Caco-2 (cell line): ENCODE measurements at regions of chr16 and their contacts with region 1.

Region 1: GRCh38 chr16:67372664-67373063 is 20.6 kb downstream of the TPPP3 start:
- DNase-seq: peak in 1 of 2 experiments; percentile 48
- H3K4me3 ChIP-seq: no peak overlapping the region
- H3K4me3 Mint-ChIP-seq: no peak overlapping the region
- H3K27ac Mint-ChIP-seq: no peak overlapping the region
- H3K4me1 ChIP-seq: no peaks in the 10 kb centered on the region
- H3K4me1 Mint-ChIP-seq: no peaks in the 10 kb centered on the region
- H3K27me3 ChIP-seq: no peaks in the 10 kb centered on the region
- H3K27me3 Mint-ChIP-seq: no peaks in the 10 kb centered on the region
- CTCF ChIP-seq: peak; percentile 55 to 58

Region 2: GRCh38 chr16:66937725-66938337 is 434.8 kb before region 1 on chr16:
- CTCF ChIA-PET with region 1: no interaction called
- POLR2A ChIA-PET with region 1: no interaction called
- intact Hi-C with region 1: no loop called
- DNase-seq: no peak
- H3K4me3 ChIP-seq: no peak overlapping the region
- H3K4me3 Mint-ChIP-seq: peak overlapping the region; percentile 13
- H3K27ac Mint-ChIP-seq: no peak overlapping the region
- H3K4me1 ChIP-seq: peaks cover 8% of the 10 kb centered on the region
- H3K4me1 Mint-ChIP-seq: peaks cover 18% of the 10 kb centered on the region
- H3K27me3 ChIP-seq: no peaks in the 10 kb centered on the region
- H3K27me3 Mint-ChIP-seq: no peaks in the 10 kb centered on the region
- CTCF ChIP-seq: no peak

Region 3: GRCh38 chr16:67384778-67385510 is 12.3 kb after region 1 on chr16:
- CTCF ChIA-PET with region 1: no interaction called
- POLR2A ChIA-PET with region 1: no interaction called
- intact Hi-C with region 1: no loop called
- DNase-seq: no peak
- H3K4me3 ChIP-seq: no peak overlapping the region
- H3K4me3 Mint-ChIP-seq: no peak overlapping the region
- H3K27ac Mint-ChIP-seq: no peak overlapping the region
- H3K4me1 ChIP-seq: no peaks in the 10 kb centered on the region
- H3K4me1 Mint-ChIP-seq: no peaks in the 10 kb centered on the region
- H3K27me3 ChIP-seq: no peaks in the 10 kb centered on the region
- H3K27me3 Mint-ChIP-seq: no peaks in the 10 kb centered on the region
- CTCF ChIP-seq: no peak

Region 4: DNA sequence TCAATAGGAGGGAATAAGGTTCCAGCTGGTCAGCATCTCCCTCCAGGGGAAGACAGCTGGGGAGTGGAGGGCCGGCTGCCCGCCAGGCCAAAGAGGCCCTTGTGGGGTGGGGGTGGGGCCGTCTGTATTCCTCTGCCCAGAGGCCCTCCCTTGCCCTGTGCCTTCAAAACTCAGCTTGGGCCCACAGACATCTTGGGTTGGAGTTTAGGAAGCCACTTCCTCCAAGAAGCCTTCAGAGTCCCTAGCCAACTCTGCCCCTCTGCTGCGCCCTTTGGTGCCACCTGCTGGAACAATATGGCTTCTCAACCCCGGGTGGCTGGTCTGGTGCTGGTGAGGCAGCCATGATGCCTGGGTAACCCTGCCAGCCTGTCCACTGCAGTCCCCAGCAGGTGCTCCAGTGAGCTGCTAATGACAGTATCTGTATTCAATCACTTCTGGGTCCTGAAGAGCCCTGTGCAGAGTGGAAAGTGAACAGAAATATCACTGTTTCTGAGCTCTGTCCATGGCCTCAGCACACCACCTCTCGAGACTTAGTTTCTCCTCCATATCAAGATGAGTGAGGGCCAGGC is 74.9 kb after region 1 on chr16:
- CTCF ChIA-PET with region 1: interaction called, 4 read pairs
- POLR2A ChIA-PET with region 1: no interaction called
- intact Hi-C with region 1: loop called (anchors 1 kb)
- DNase-seq: peak; percentile 70 to 74
- H3K4me3 ChIP-seq: no peak overlapping the region
- H3K4me3 Mint-ChIP-seq: no peak overlapping the region
- H3K27ac Mint-ChIP-seq: no peak overlapping the region
- H3K4me1 ChIP-seq: no peaks in the 10 kb centered on the region
- H3K4me1 Mint-ChIP-seq: no peaks in the 10 kb centered on the region
- H3K27me3 ChIP-seq: no peaks in the 10 kb centered on the region
- H3K27me3 Mint-ChIP-seq: no peaks in the 10 kb centered on the region
- CTCF ChIP-seq: peak; percentile 64 to 69

Region 5: GRCh38 chr16:67470359-67470758 is 97.7 kb after region 1 on chr16:
- CTCF ChIA-PET with region 1: interaction called, 3 read pairs
- POLR2A ChIA-PET with region 1: no interaction called
- intact Hi-C with region 1: loop called (anchors 1 kb)
- DNase-seq: no peak
- H3K4me3 ChIP-seq: no peak overlapping the region
- H3K4me3 Mint-ChIP-seq: no peak overlapping the region
- H3K27ac Mint-ChIP-seq: no peak overlapping the region
- H3K4me1 ChIP-seq: no peaks in the 10 kb centered on the region
- H3K4me1 Mint-ChIP-seq: no peaks in the 10 kb centered on the region
- H3K27me3 ChIP-seq: no peaks in the 10 kb centered on the region
- H3K27me3 Mint-ChIP-seq: no peaks in the 10 kb centered on the region
- CTCF ChIP-seq: no peak